Panc1 (cell line): ENCODE measurements at regions of chr16 and their contacts with region 1.

Region 1: GRCh38 chr16:25111403-25112166 is at the start of gene LCMT1:
- DNase-seq: peak; percentile 98
- ATAC-seq: peak; percentile 95
- H3K4me3 ChIP-seq: peak within 1 kb of the TSS; percentile 82 to 95
- H3K27ac ChIP-seq: peak within 1 kb of the TSS; percentile 86
- H3K4me1 ChIP-seq: peaks cover 23% of the 10 kb centered on the region
- H3K27me3 ChIP-seq: no peaks in the 10 kb centered on the region
- CTCF ChIP-seq: no peak
- total RNA-seq, gene LCMT1: 44.2 TPM

Region 2: DNA sequence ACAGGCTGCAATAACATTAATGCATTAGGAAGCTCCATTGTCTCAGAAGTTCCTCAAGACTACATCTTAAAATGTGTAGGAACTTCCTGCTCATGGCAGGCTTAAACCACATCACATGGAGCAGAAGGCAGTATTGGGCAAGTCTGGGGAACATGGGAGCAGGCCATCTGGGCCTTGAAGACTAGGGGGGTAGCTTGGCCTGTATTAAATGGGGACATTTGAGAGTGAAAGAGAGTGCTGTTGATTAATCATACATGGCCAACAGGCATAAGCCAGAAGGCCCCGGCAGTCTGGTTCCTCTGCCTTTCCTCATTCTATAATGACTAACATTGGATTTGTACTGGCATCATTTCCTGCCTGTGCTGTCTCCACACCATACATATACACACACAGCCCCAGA is 291.1 kb before region 1 on chr16:
- CTCF ChIA-PET with region 1: no interaction called
- POLR2A ChIA-PET with region 1: no interaction called
- in situ Hi-C with region 1: no loop called
- intact Hi-C with region 1: no loop called
- DNase-seq: no peak
- ATAC-seq: no peak
- H3K4me3 ChIP-seq: no peak overlapping the region
- H3K27ac ChIP-seq: no peak overlapping the region
- H3K4me1 ChIP-seq: no peaks in the 10 kb centered on the region
- H3K27me3 ChIP-seq: no peaks in the 10 kb centered on the region
- CTCF ChIP-seq: no peak

Region 3: GRCh38 chr16:24999856-25000461 is 111.6 kb before region 1 on chr16:
- CTCF ChIA-PET with region 1: no interaction called
- POLR2A ChIA-PET with region 1: no interaction called
- in situ Hi-C with region 1: no loop called
- intact Hi-C with region 1: no loop called
- DNase-seq: no peak
- ATAC-seq: peak; percentile 77
- H3K4me3 ChIP-seq: no peak overlapping the region
- H3K27ac ChIP-seq: peak overlapping the region; percentile 68
- H3K4me1 ChIP-seq: peaks cover 65% of the 10 kb centered on the region
- H3K27me3 ChIP-seq: no peaks in the 10 kb centered on the region
- CTCF ChIP-seq: no peak

Region 4: DNA sequence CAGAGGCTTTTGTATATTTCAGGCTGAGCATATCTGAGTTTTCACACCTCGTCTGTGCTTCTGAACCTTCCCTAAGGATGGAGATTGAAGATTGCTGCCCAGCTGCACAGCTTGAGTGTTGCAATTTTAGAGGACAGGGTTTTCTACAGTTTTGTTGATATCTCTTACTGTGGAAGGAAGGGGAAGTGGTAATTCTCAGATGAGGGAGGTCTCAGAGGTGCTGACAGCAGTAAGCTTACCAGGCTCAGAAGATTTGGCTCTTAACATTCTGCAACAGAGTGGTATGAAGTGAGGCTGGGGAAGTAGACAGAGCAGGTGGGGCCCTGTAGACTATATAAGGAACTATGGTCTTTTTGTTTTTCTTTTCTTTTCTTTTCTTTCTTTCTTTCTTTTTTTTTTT is 50.7 kb before region 1 on chr16:
- CTCF ChIA-PET with region 1: interaction called, 4 read pairs
- POLR2A ChIA-PET with region 1: no interaction called
- in situ Hi-C with region 1: no loop called
- intact Hi-C with region 1: loop called (anchors 5 kb)
- DNase-seq: no peak
- ATAC-seq: no peak
- H3K4me3 ChIP-seq: no peak overlapping the region
- H3K27ac ChIP-seq: no peak overlapping the region
- H3K4me1 ChIP-seq: no peaks in the 10 kb centered on the region
- H3K27me3 ChIP-seq: no peaks in the 10 kb centered on the region
- CTCF ChIP-seq: no peak

Region 5: GRCh38 chr16:25066747-25067631 is 44.6 kb before region 1 on chr16:
- CTCF ChIA-PET with region 1: no interaction called
- POLR2A ChIA-PET with region 1: interaction called, 11 read pairs
- in situ Hi-C with region 1: no loop called
- intact Hi-C with region 1: loop called (anchors 5 kb)
- DNase-seq: no peak
- ATAC-seq: peak; percentile 97
- H3K4me3 ChIP-seq: peak overlapping the region; percentile 83 to 84
- H3K27ac ChIP-seq: peak overlapping the region; percentile 94
- H3K4me1 ChIP-seq: peaks cover 9% of the 10 kb centered on the region
- H3K27me3 ChIP-seq: no peaks in the 10 kb centered on the region
- CTCF ChIP-seq: no peak

Region 6: GRCh38 chr16:25151996-25152395 is 40.4 kb after region 1 on chr16:
- CTCF ChIA-PET with region 1: no interaction called
- POLR2A ChIA-PET with region 1: interaction called, 11 read pairs
- in situ Hi-C with region 1: no loop called
- intact Hi-C with region 1: no loop called
- DNase-seq: no peak
- ATAC-seq: no peak
- H3K4me3 ChIP-seq: no peak overlapping the region
- H3K27ac ChIP-seq: no peak overlapping the region
- H3K4me1 ChIP-seq: no peaks in the 10 kb centered on the region
- H3K27me3 ChIP-seq: no peaks in the 10 kb centered on the region
- CTCF ChIP-seq: no peak

Region 7: GRCh38 chr16:25257504-25257955 is 145.9 kb after region 1 on chr16 and contains the start of gene ZKSCAN2:
- CTCF ChIA-PET with region 1: interaction called, 11 read pairs
- POLR2A ChIA-PET with region 1: no interaction called
- in situ Hi-C with region 1: no loop called
- intact Hi-C with region 1: no loop called
- DNase-seq: peak; percentile 20
- ATAC-seq: peak; percentile 93
- H3K4me3 ChIP-seq: peak within 1 kb of the TSS; percentile 78 to 90
- H3K27ac ChIP-seq: peak within 1 kb of the TSS; percentile 85
- H3K4me1 ChIP-seq: peaks cover 4% of the 10 kb centered on the region; the same call in 1 of the 2 replicates
- H3K27me3 ChIP-seq: no peaks in the 10 kb centered on the region
- CTCF ChIP-seq: no peak
- total RNA-seq, gene ZKSCAN2: 11.4 TPM